Transverse colon (tissue), 4 donors: ENCODE measurements at regions of chr12 and their contacts with region 1.

Region 1: DNA sequence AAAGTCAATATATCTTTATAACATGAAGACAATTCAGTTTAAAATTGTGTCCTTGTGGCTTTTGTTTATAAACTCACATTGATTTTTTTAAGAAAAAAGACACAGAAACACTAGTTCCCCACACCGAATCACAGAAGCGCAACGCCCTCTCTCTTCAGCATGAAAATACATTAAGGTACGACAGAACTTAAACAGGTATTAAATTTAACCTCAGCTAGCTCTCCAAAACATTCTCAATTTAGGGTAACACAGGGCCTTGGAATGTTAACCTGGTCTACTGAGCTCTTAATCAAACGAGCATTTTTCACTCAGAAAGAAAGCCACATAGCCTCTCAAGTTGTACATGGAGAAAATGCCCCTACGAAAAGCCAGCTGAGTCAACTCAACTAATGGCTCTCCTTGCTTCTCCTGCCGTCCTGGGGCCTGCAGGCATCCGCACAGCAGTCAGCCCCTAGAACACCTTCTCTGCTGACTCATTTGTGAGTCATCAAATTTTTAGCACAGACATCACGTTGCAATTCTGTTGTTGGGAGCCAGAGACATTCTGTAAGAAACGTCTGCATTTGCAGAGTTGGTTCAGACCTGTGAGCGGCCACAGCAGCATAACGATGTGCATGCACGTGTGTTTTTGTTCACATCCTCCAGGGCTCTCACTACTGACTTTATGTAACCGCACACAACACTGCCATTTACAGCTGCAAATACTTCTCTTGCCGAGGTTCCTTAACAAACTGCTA is 141.6 kb downstream of the ITPR2 start:
- DNase-seq: no peak
- H3K4me3 ChIP-seq: no peak overlapping the region
- H3K27ac ChIP-seq: no peak overlapping the region
- H3K4me1 ChIP-seq: no peaks in the 10 kb centered on the region
- H3K27me3 ChIP-seq: no peaks in the 10 kb centered on the region
- CTCF ChIP-seq: no peak
- EP300 ChIP-seq: no peak
- POLR2A ChIP-seq: no peak

Region 2: GRCh38 chr12:26791301-26791791 is 99.9 kb after region 1 on chr12:
- in situ Hi-C with region 1: loop called in 1 of 4 experiments (anchors 25 kb)
- intact Hi-C with region 1: no loop called
- DNase-seq: no peak
- H3K4me3 ChIP-seq: no peak overlapping the region
- H3K27ac ChIP-seq: peak overlapping the region; percentile 32 to 60 (median 38)
- H3K4me1 ChIP-seq: peaks cover 5 to 63% (median 45%) of the 10 kb centered on the region in 4 donors
- H3K27me3 ChIP-seq: no peaks in the 10 kb centered on the region
- CTCF ChIP-seq: no peak
- EP300 ChIP-seq: no peak
- POLR2A ChIP-seq: no peak